HCT116 (cell line): ENCODE measurements at regions of chr7 and their contacts with region 1.

Region 1: GRCh38 chr7:158052381-158053060 is 535.1 kb downstream of the PTPRN2 start:
- DNase-seq: no peak
- ATAC-seq: no peak
- H3K4me3 ChIP-seq: no peak overlapping the region
- H3K27ac ChIP-seq: no peak overlapping the region
- H3K4me1 ChIP-seq: no peaks in the 10 kb centered on the region
- H3K27me3 ChIP-seq: no peaks in the 10 kb centered on the region
- CTCF ChIP-seq: no peak
- POLR2A ChIP-seq: no peak
- RAD21 ChIP-seq: no peak

Region 2: DNA sequence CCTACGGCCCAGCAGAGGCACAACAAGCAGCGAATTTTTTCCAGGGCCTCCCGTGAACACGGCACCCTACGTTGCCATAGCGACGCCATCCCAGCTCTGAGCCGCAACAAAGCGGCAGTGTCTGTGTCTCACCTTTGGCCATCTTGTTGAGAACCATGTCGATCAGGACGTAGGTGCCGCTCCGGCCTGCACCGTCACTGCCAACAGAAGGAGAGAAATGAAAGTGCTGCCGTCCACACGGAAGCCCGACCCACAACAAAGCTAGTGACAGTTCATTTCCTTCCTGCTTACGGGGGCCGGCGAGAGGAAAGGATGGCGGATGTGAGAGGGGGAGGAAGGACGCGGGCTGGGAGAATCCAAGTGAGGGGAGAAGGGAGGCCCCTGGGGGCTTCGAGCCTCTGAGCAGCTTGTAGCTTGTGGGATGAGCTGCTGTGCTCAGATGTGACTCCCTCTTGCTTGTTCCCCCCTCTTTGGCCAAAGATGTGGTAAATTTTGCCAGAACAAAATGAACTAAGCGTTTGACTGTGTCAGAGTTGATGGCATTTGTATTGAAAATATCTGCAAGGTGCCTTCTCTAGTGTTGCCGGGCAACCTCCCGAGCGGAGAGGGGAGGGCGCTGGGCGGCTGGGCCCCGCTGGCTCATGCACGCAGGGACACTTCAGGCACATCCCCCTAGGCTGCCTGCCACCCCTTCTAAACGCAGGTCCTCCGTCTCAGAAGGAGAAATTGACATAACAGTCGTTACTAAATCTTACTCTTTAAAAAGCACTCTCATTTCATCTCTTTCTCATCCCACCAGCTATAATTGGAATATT is 483.5 kb before region 1 on chr7:
- CTCF ChIA-PET with region 1: no interaction called
- POLR2A ChIA-PET with region 1: no interaction called
- RAD21 ChIA-PET with region 1: no interaction called
- intact Hi-C with region 1: no loop called
- DNase-seq: no peak
- ATAC-seq: no peak
- H3K4me3 ChIP-seq: no peak overlapping the region
- H3K27ac ChIP-seq: no peak overlapping the region
- H3K4me1 ChIP-seq: peaks cover 18 to 26% of the 10 kb centered on the region in 2 experiments
- H3K27me3 ChIP-seq: no peaks in the 10 kb centered on the region
- CTCF ChIP-seq: no peak
- POLR2A ChIP-seq: no peak
- RAD21 ChIP-seq: no peak

Region 3: GRCh38 chr7:158228986-158229385 is 176.5 kb after region 1 on chr7:
- CTCF ChIA-PET with region 1: no interaction called
- POLR2A ChIA-PET with region 1: no interaction called
- RAD21 ChIA-PET with region 1: no interaction called
- intact Hi-C with region 1: loop called (anchors 2 kb)
- DNase-seq: peak; percentile 13
- ATAC-seq: peak; percentile 58
- H3K4me3 ChIP-seq: no peak overlapping the region
- H3K27ac ChIP-seq: no peak overlapping the region
- H3K4me1 ChIP-seq: no peaks in the 10 kb centered on the region
- H3K27me3 ChIP-seq: no peaks in the 10 kb centered on the region
- CTCF ChIP-seq: peak; percentile 25 to 49 (median 47); a peak in 4 of 6 replicates
- POLR2A ChIP-seq: no peak
- RAD21 ChIP-seq: peak; percentile 79

Region 4: DNA sequence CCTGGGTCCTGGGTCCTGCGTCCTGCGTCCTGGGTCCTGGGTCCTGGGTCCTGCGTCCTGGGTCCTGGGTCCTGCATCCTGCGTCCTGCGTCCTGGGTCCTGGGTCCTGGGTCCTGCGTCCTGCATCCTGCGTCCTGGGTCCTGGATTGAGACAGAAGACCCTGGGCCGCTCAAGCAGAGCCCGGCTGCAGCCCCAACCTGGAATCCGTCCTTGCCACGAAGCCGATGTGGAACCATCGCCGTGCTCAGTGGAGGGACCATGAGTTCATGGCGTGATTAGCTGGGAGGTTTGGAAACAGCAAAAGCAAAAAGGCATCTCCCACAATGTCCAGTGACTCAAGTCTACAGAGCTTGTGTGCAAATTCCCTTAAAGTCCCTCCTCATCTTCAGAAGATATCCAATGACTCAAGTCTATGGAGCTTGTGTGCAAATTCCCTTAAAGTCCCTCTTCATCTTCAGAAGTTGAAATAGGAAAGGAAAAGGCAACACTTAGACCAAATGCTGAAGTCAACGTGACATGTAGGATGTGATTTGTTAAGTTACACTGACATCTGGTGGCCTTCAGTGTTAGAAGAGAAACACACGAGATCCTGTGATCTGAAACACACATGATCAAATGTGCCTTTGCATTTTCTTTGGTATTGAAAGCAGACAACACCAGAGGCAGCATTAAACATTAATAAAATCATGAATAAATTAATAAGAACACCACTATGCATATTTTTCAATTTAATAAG is 355.2 kb after region 1 on chr7:
- CTCF ChIA-PET with region 1: no interaction called
- POLR2A ChIA-PET with region 1: no interaction called
- RAD21 ChIA-PET with region 1: no interaction called
- intact Hi-C with region 1: loop called (anchors 2 kb)
- DNase-seq: peak; percentile 48
- ATAC-seq: peak; percentile 73
- H3K4me3 ChIP-seq: no peak overlapping the region
- H3K27ac ChIP-seq: no peak overlapping the region
- H3K4me1 ChIP-seq: no peaks in the 10 kb centered on the region
- H3K27me3 ChIP-seq: no peaks in the 10 kb centered on the region
- CTCF ChIP-seq: peak; percentile 37 to 64 (median 44); a peak in 4 of 6 replicates
- POLR2A ChIP-seq: no peak
- RAD21 ChIP-seq: peak; percentile 77